ENCODE measurements at regions of chr20 and their contacts with region 1.

Region 1: DNA sequence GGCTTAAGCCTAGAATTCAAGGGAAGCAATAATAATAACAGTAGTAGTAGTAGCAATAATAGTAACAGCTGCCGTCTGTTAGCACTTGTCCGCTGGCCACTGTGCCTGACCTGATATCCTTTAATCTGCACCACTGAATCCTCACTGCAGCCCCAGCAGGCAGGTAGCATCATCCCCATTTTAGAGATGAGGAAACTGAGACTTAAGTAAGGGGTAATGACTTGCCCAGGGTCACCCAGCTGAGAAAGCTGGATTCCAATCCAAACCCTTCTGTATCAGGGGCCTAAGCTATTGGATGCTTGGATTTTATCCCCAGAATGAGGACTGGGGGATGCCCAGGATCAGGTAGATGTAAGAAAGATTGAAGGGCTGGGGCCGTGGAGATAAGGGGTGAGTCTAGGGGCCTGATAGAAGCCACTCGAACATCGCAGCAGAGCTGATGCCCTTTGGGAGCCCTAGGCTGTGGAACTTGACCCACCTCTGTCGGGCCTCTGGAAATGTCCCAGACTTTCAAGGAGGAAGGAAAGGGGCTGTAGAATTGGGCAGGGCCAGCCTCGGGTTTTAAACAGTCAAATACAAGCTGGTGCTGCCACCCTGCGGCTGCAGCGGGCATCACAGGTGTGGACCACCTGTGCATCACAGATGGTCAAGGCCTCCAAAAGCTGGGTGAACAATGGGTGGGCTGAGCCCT is 102.1 kb upstream of the MYL9 start:
- DNase-seq: peak; percentile 88 to 94
- H3K4me3 ChIP-seq: no peak overlapping the region
- H3K4me3 Mint-ChIP-seq: no peak overlapping the region
- H3K27ac Mint-ChIP-seq: no peak overlapping the region
- H3K4me1 ChIP-seq: peaks cover 3% of the 10 kb centered on the region; the same call in 1 of the 2 replicates
- H3K4me1 Mint-ChIP-seq: peaks cover 11% of the 10 kb centered on the region
- H3K27me3 ChIP-seq: no peaks in the 10 kb centered on the region
- H3K27me3 Mint-ChIP-seq: no peaks in the 10 kb centered on the region
- CTCF ChIP-seq: peak; percentile 99 to 100

Region 2: GRCh38 chr20:36154700-36155628 is 284.2 kb before region 1 on chr20 and contains the start of gene EPB41L1:
- CTCF ChIA-PET with region 1: interaction called, 11 read pairs
- POLR2A ChIA-PET with region 1: no interaction called
- intact Hi-C with region 1: loop called (anchors 5 kb)
- DNase-seq: no peak
- H3K4me3 ChIP-seq: no peak within 1 kb of the TSS
- H3K4me3 Mint-ChIP-seq: no peak within 1 kb of the TSS
- H3K27ac Mint-ChIP-seq: no peak within 1 kb of the TSS
- H3K4me1 ChIP-seq: peaks cover 14% of the 10 kb centered on the region
- H3K4me1 Mint-ChIP-seq: no peaks in the 10 kb centered on the region
- H3K27me3 ChIP-seq: no peaks in the 10 kb centered on the region
- H3K27me3 Mint-ChIP-seq: no peaks in the 10 kb centered on the region
- CTCF ChIP-seq: no peak
- total RNA-seq, gene EPB41L1: 129 and 137 TPM in 2 replicates

Region 3: GRCh38 chr20:36214684-36215256 is 224.4 kb before region 1 on chr20:
- CTCF ChIA-PET with region 1: interaction called, 8 read pairs
- POLR2A ChIA-PET with region 1: no interaction called
- intact Hi-C with region 1: loop called (anchors 1 kb)
- DNase-seq: peak in 1 of 2 experiments; percentile 60
- H3K4me3 ChIP-seq: no peak overlapping the region
- H3K4me3 Mint-ChIP-seq: no peak overlapping the region
- H3K27ac Mint-ChIP-seq: no peak overlapping the region
- H3K4me1 ChIP-seq: no peaks in the 10 kb centered on the region
- H3K4me1 Mint-ChIP-seq: peaks cover 5% of the 10 kb centered on the region
- H3K27me3 ChIP-seq: no peaks in the 10 kb centered on the region
- H3K27me3 Mint-ChIP-seq: no peaks in the 10 kb centered on the region
- CTCF ChIP-seq: peak; percentile 91 to 93

Region 4: DNA sequence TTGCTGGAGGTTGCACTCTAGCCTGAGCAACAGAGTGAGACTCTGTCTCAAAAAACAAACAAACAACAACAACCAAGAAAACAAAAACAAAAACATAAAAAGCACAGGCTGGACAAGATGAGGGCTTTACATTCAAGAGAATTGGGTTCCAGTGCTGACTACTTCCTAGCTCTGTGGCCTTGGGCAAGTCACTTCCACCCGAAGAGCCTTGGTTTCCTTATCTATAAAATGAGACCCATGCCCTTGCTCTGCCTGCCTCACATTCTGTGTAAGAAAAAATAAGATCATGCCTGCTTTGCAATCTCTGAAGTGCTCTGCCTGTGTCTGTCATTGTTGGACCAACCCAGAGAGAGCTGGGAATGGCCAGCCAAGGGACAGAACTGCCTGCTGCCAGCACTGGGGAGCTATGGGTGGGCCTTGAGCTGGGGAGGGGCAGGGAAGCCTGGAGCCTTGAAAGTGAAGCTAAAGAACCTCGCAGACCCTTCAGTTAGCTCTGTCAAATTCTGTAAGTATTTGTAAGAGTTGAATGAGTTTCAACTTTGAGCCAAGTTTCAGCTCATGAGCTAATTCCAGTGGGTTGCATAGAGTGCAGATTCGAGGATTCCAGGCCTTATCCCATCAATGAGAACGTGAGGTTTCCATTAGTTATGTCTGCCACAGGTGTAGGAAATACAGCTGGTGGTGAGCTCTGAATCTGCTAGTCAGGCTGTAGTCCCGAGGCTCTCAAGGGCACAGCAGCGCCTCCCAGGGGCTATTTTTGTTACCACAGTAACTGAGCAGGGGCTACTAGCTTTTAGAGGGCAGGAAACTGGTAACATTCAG is 39.8 kb before region 1 on chr20:
- CTCF ChIA-PET with region 1: interaction called, 13 read pairs
- POLR2A ChIA-PET with region 1: no interaction called
- intact Hi-C with region 1: no loop called
- DNase-seq: peak; percentile 86 to 87
- H3K4me3 ChIP-seq: no peak overlapping the region
- H3K4me3 Mint-ChIP-seq: no peak overlapping the region
- H3K27ac Mint-ChIP-seq: no peak overlapping the region
- H3K4me1 ChIP-seq: no peaks in the 10 kb centered on the region
- H3K4me1 Mint-ChIP-seq: no peaks in the 10 kb centered on the region
- H3K27me3 ChIP-seq: no peaks in the 10 kb centered on the region
- H3K27me3 Mint-ChIP-seq: peaks cover 12% of the 10 kb centered on the region
- CTCF ChIP-seq: peak; percentile 69 to 72

Region 5: DNA sequence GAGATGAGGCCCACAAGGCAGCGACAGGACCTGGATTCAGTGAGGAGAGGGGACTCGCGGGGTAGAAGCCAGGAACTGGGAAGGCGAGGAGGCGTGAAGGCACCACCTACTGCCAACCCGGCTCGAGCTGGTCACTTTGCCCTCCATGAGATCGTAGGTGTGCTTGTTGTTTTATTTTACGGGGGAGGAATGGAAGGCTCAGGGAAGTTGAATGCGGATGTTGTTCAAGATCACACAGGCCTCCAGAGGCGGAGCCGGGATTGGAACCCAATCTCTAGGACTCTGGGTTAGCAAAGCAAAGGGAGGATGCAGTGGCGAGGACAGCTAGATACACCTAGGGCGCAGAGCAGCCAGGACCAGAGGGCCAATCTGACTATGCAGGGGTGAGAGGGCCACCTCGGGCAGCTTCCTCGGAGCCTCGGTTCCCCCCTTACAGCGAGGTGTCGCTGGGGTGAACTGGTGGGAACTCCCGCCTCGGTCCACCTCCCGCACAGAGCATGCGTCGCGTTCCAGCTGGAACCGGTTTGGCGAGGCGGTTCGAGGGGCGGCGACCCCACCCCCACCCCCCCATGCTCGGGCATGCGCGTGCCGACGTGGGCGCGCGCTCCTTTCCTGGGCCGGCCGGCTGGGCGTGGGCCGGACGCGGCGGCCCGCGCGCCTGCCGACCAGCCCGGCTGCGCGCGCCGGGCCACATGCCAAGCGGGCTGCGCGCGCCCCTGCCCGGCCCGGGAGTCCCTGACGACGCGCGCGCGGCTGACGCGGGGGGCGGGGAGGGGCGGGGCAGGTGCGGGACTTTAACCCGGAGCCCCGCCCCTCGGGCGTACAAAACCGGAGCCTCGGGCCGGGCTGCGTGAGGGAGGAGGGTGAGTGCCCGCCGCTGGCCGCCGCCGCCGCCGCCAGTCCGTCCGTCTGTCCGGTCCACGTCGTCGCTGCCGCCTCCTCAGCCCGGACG is 21.7 kb after region 1 on chr20:
- CTCF ChIA-PET with region 1: interaction called, 3 read pairs
- POLR2A ChIA-PET with region 1: no interaction called
- intact Hi-C with region 1: loop called (anchors 2 kb)
- DNase-seq: peak; percentile 97 to 98
- H3K4me3 ChIP-seq: peak overlapping the region; percentile 61
- H3K4me3 Mint-ChIP-seq: peak overlapping the region; percentile 98
- H3K27ac Mint-ChIP-seq: peak overlapping the region; percentile 86
- H3K4me1 ChIP-seq: peaks cover 49% of the 10 kb centered on the region
- H3K4me1 Mint-ChIP-seq: peaks cover 31% of the 10 kb centered on the region
- H3K27me3 ChIP-seq: no peaks in the 10 kb centered on the region
- H3K27me3 Mint-ChIP-seq: no peaks in the 10 kb centered on the region
- CTCF ChIP-seq: peak in 1 of 2 experiments; percentile 16

Measured in Caco-2 (cell line).